ENCODE measurements at regions of chr3 and their contacts with region 1.

Region 1: GRCh38 chr3:21752749-21753347 is 1.8 kb upstream of the ZNF385D start:
- DNase-seq: peak in 1 of 2 experiments; percentile 5
- H3K4me3 ChIP-seq: no peak overlapping the region
- H3K4me3 Mint-ChIP-seq: no peak overlapping the region
- H3K27ac Mint-ChIP-seq: no peak overlapping the region
- H3K4me1 ChIP-seq: no peaks in the 10 kb centered on the region
- H3K4me1 Mint-ChIP-seq: no peaks in the 10 kb centered on the region
- H3K27me3 ChIP-seq: no peaks in the 10 kb centered on the region
- H3K27me3 Mint-ChIP-seq: peaks cover 6% of the 10 kb centered on the region
- CTCF ChIP-seq: peak; percentile 19 to 39

Region 2: GRCh38 chr3:21551019-21551418 is 201.8 kb before region 1 on chr3:
- CTCF ChIA-PET with region 1: no interaction called
- POLR2A ChIA-PET with region 1: no interaction called
- intact Hi-C with region 1: no loop called
- DNase-seq: peak in 1 of 2 experiments; percentile 34
- H3K4me3 ChIP-seq: no peak overlapping the region
- H3K4me3 Mint-ChIP-seq: no peak overlapping the region
- H3K27ac Mint-ChIP-seq: no peak overlapping the region
- H3K4me1 ChIP-seq: no peaks in the 10 kb centered on the region
- H3K4me1 Mint-ChIP-seq: no peaks in the 10 kb centered on the region
- H3K27me3 ChIP-seq: no peaks in the 10 kb centered on the region
- H3K27me3 Mint-ChIP-seq: no peaks in the 10 kb centered on the region
- CTCF ChIP-seq: peak in 1 of 2 experiments; percentile 8

Region 3: GRCh38 chr3:21729888-21730459 is 22.9 kb before region 1 on chr3:
- CTCF ChIA-PET with region 1: no interaction called
- POLR2A ChIA-PET with region 1: no interaction called
- intact Hi-C with region 1: no loop called
- DNase-seq: no peak
- H3K4me3 ChIP-seq: no peak overlapping the region
- H3K4me3 Mint-ChIP-seq: no peak overlapping the region
- H3K27ac Mint-ChIP-seq: no peak overlapping the region
- H3K4me1 ChIP-seq: no peaks in the 10 kb centered on the region
- H3K4me1 Mint-ChIP-seq: no peaks in the 10 kb centered on the region
- H3K27me3 ChIP-seq: no peaks in the 10 kb centered on the region
- H3K27me3 Mint-ChIP-seq: peaks cover 5% of the 10 kb centered on the region
- CTCF ChIP-seq: no peak

Region 4: GRCh38 chr3:21830541-21830940 is 77.7 kb after region 1 on chr3:
- CTCF ChIA-PET with region 1: no interaction called
- POLR2A ChIA-PET with region 1: no interaction called
- intact Hi-C with region 1: loop called (anchors 5 kb)
- DNase-seq: no peak
- H3K4me3 ChIP-seq: no peak overlapping the region
- H3K4me3 Mint-ChIP-seq: no peak overlapping the region
- H3K27ac Mint-ChIP-seq: no peak overlapping the region
- H3K4me1 ChIP-seq: no peaks in the 10 kb centered on the region
- H3K4me1 Mint-ChIP-seq: no peaks in the 10 kb centered on the region
- H3K27me3 ChIP-seq: no peaks in the 10 kb centered on the region
- H3K27me3 Mint-ChIP-seq: peaks cover 7% of the 10 kb centered on the region
- CTCF ChIP-seq: no peak

Region 5: GRCh38 chr3:21894459-21895340 is 141.9 kb after region 1 on chr3:
- CTCF ChIA-PET with region 1: interaction called, 3 read pairs
- POLR2A ChIA-PET with region 1: no interaction called
- intact Hi-C with region 1: loop called (anchors 2 kb)
- DNase-seq: no peak
- H3K4me3 ChIP-seq: no peak overlapping the region
- H3K4me3 Mint-ChIP-seq: no peak overlapping the region
- H3K27ac Mint-ChIP-seq: no peak overlapping the region
- H3K4me1 ChIP-seq: no peaks in the 10 kb centered on the region
- H3K4me1 Mint-ChIP-seq: no peaks in the 10 kb centered on the region
- H3K27me3 ChIP-seq: no peaks in the 10 kb centered on the region
- H3K27me3 Mint-ChIP-seq: peaks cover 4% of the 10 kb centered on the region
- CTCF ChIP-seq: peak in 1 of 2 experiments; percentile 27

Region 6: DNA sequence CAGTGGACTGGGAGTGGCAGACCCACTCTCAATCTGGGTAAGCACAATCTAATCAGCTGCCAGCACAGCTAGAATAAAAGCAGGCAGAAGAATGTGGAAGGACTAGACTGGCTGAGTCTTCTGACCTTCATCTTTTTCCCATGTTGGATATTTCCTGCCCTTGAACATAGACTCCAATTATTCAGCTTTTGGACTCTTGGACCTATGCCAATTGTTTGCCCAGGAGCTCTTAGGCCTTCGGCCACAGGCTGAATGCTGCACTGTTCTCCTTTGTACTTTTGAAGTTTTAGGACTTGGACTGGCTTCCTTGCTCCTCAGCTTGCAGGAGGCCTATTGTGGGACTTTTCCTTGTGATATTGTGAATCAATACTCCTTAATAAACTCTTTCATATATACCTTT is 475.9 kb after region 1 on chr3:
- CTCF ChIA-PET with region 1: no interaction called
- POLR2A ChIA-PET with region 1: no interaction called
- intact Hi-C with region 1: no loop called
- DNase-seq: no peak
- H3K4me3 ChIP-seq: no peak overlapping the region
- H3K4me3 Mint-ChIP-seq: no peak overlapping the region
- H3K27ac Mint-ChIP-seq: no peak overlapping the region
- H3K4me1 ChIP-seq: no peaks in the 10 kb centered on the region
- H3K4me1 Mint-ChIP-seq: no peaks in the 10 kb centered on the region
- H3K27me3 ChIP-seq: no peaks in the 10 kb centered on the region
- H3K27me3 Mint-ChIP-seq: no peaks in the 10 kb centered on the region
- CTCF ChIP-seq: no peak

Measured in Caco-2 (cell line).